ENCODE measurements at regions of chr4 and their contacts with region 1.

Region 1: GRCh38 chr4:145557720-145558119 is 61.5 kb upstream of the MMAA start:
- DNase-seq: peak; percentile 82
- H3K4me3 ChIP-seq: no peak overlapping the region
- H3K27ac ChIP-seq: no peak overlapping the region
- H3K4me1 ChIP-seq: no peaks in the 10 kb centered on the region
- H3K27me3 ChIP-seq: no peaks in the 10 kb centered on the region

Region 2: GRCh38 chr4:145234091-145234706 is 323.5 kb before region 1 on chr4:
- in situ Hi-C with region 1: loop called (anchors 25 kb)
- DNase-seq: peak; percentile 67
- H3K4me3 ChIP-seq: no peak overlapping the region
- H3K27ac ChIP-seq: no peak overlapping the region
- H3K4me1 ChIP-seq: peaks cover 26% of the 10 kb centered on the region
- H3K27me3 ChIP-seq: no peaks in the 10 kb centered on the region

Region 3: DNA sequence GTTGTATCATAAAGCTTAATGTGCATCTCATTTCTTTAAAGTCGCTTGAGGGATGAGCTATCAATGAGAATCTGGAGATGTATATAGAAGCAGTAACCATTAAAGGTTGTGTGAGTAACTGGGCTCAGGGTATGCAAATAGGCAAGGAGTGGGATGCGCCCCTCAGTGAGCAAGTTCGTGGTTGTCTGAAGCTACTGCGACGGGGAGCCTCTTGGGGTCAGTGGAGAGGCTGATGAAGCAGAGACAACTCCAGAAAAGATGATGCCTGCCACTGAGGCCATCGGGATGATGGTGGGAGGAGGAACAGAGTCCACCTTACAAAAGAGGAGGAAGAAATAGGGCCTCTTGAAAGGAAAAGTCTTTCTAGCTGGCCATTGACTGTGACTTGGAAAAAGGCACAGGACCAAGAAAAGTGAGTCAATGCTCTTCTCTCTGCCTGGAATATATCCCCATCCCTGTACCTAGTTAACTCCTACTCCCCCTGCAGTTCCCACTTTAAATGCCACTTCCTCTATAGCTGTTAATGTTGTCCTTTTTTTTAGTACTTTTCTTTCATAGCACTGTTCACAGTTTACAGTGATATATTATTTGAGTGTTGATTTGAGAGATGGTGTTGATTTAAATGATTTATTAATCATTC is 566.4 kb after region 1 on chr4:
- in situ Hi-C with region 1: no loop called
- DNase-seq: peak; percentile 24
- H3K4me3 ChIP-seq: no peak overlapping the region
- H3K27ac ChIP-seq: no peak overlapping the region
- H3K4me1 ChIP-seq: no peaks in the 10 kb centered on the region
- H3K27me3 ChIP-seq: no peaks in the 10 kb centered on the region

Measured in GM23248 (cell line).